Activated CD8-positive, alpha-beta T cell treated with anti-CD3 and anti-CD28 coated beads for 36 hours (primary cell): ENCODE measurements at regions of chr4 and their contacts with region 1.

Region 1: DNA sequence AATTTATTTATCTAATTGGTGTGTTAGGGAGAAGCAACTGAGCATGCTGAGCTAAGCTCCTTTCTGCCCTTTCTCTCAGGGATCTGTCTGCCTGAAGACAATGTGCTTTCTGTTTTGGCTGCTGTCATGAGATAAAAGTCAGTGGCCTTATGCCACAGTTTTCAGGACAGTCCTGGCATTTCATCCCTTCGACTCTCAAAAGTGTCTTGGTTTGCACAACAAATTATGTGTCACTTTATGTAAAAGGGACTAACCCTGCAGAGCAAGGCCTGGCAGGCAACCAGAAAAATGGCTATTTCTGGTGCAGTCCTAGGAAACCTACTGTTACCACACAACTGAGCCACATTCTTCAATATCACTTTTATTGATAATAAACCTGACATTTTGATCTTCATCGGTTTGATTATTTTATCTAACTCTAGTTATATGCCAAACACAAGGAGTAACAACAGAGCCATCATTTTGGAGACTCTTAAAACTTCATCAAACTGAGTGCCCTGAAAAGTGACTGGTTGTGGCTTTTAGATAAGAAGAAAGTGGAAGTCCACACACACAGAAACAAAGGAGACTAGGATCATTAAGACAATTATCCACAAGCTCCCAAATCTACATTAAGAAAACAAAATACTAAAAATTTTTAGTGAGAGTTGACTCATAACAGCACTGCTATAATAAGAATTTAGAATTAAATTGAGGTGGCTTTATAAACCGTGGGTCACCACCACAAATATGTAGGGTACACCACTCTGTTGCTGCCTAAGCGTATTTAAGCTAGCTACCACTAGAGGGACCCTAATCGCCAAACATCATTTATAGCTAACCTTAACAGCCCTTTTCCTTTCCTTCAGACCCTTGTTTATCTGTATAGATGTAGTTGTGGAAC is 95.9 kb upstream of the PTPN13 start:
- DNase-seq: no peak
- ATAC-seq: peak; percentile 79
- H3K4me3 Mint-ChIP-seq: no peak overlapping the region
- H3K27ac Mint-ChIP-seq: no peak overlapping the region
- H3K4me1 Mint-ChIP-seq: no peaks in the 10 kb centered on the region
- H3K27me3 Mint-ChIP-seq: peaks cover 4% of the 10 kb centered on the region
- CTCF ChIP-seq: peak; percentile 79

Region 2: DNA sequence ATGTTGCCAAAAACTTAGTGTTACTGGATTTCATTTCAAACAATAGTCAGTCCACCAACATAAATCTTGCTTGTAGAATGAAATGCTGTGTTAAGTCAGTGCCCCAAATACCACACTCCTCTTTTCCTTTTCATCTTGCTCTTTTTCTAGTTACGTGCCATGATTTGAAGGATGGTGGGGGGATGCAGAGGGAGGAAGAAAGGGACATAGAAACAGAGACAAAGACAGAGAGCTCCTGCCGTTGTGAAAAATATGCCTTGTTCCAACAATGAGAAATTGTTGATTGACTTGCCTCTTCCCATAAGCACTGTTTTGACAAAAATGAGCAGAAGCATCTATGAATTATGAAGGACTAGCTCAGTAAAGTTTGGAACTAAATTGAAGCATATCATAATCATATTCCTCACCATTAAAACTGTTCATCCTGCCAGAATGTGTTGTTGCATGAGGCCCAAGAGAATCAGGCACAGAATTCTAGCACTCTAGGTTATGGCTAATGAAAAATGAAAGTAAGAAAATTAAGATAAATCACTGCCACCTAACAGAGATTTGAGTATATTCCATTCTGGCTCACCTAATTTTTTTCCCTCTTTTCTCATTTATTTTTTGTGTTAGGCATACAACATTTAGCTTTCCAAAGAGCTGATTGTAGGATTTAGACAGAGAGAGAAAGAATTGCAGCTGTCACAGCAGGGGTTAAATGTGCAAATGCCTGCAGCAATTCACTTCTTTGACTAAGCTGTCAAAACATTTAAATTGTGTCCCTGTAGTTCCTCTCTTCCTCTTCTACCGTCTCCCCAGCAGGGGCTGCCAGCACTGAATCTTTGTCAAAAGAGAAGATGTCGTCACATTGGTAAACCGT is 15.7 kb before region 1 on chr4:
- CTCF ChIA-PET with region 1: interaction called, 27 read pairs
- POLR2A ChIA-PET with region 1: no interaction called
- intact Hi-C with region 1: no loop called
- DNase-seq: peak; percentile 3
- ATAC-seq: no peak
- H3K4me3 Mint-ChIP-seq: no peak overlapping the region
- H3K27ac Mint-ChIP-seq: no peak overlapping the region
- H3K4me1 Mint-ChIP-seq: no peaks in the 10 kb centered on the region
- H3K27me3 Mint-ChIP-seq: no peaks in the 10 kb centered on the region
- CTCF ChIP-seq: no peak

Region 3: GRCh38 chr4:86487738-86488348 is 10.4 kb before region 1 on chr4:
- CTCF ChIA-PET with region 1: interaction called, 27 read pairs
- POLR2A ChIA-PET with region 1: no interaction called
- intact Hi-C with region 1: no loop called
- DNase-seq: no peak
- ATAC-seq: no peak
- H3K4me3 Mint-ChIP-seq: no peak overlapping the region
- H3K27ac Mint-ChIP-seq: no peak overlapping the region
- H3K4me1 Mint-ChIP-seq: no peaks in the 10 kb centered on the region
- H3K27me3 Mint-ChIP-seq: no peaks in the 10 kb centered on the region
- CTCF ChIP-seq: no peak

Region 4: DNA sequence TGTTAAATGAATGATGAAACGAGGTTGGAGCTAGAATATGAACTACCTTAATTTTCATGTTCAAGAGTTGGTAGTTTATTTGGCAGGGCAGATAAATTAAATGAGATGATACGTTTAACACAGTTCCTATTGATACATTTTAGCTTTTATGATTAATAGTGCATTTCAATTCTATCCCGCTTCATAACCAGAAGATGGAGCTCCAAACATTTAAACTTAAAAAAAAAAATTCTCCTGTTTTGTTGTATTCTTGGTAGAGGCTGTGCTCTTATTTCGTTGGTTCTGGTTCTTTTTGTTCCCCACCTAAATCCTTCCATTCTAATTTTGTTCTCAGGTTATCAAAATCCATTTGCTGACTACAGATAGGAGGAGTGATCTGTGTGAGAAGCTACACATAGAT is 24.1 kb after region 1 on chr4:
- CTCF ChIA-PET with region 1: interaction called, 10 read pairs
- POLR2A ChIA-PET with region 1: no interaction called
- intact Hi-C with region 1: no loop called
- DNase-seq: no peak
- ATAC-seq: no peak
- H3K4me3 Mint-ChIP-seq: no peak overlapping the region
- H3K27ac Mint-ChIP-seq: no peak overlapping the region
- H3K4me1 Mint-ChIP-seq: no peaks in the 10 kb centered on the region
- H3K27me3 Mint-ChIP-seq: peaks cover 4% of the 10 kb centered on the region
- CTCF ChIP-seq: no peak

Region 5: DNA sequence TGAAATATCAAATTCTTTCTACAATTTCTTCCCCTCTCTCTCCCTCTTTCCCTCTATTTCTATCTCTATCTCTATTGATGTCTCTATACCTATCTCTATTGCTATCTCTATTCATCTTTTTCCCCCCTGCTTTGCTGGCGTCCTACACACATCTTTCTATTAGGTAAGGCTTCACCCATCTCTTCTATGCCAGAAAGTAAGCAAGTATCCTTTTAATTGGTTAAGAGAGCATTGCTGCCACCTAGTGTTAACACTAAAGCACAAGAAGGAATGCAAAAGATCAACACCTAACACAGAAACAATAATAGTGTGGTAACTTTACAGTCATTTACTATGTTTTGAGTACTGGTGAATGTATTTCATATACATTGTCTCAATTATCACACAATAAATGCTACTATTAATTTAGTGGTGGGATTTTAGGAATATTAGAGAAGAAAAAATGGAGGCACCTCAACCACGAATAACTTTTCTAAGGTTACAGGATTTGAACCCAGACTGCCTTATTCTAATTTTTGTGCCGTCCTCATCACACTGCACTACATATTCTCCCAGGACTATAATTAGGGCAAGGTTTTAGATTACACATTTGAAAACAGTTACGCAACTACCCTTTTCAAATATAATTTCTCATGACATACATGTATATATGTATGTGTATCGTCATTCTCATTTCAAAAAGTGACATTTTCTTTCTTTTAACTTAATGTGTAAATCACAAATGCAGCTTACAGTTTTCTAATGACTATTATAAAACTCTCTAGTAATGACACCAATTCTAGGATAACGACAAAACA is 397.7 kb after region 1 on chr4:
- CTCF ChIA-PET with region 1: interaction called, 23 read pairs
- POLR2A ChIA-PET with region 1: interaction called, 5 read pairs
- intact Hi-C with region 1: loop called (anchors 1 kb)
- DNase-seq: no peak
- ATAC-seq: peak; percentile 52
- H3K4me3 Mint-ChIP-seq: no peak overlapping the region
- H3K27ac Mint-ChIP-seq: no peak overlapping the region
- H3K4me1 Mint-ChIP-seq: peaks cover 8% of the 10 kb centered on the region
- H3K27me3 Mint-ChIP-seq: peaks cover 17% of the 10 kb centered on the region
- CTCF ChIP-seq: peak; percentile 77

Region 6: GRCh38 chr4:86908251-86908657 is 410.0 kb after region 1 on chr4:
- CTCF ChIA-PET with region 1: interaction called, 13 read pairs
- POLR2A ChIA-PET with region 1: no interaction called
- intact Hi-C with region 1: no loop called
- DNase-seq: no peak
- ATAC-seq: no peak
- H3K4me3 Mint-ChIP-seq: no peak overlapping the region
- H3K27ac Mint-ChIP-seq: no peak overlapping the region
- H3K4me1 Mint-ChIP-seq: peaks cover 16% of the 10 kb centered on the region
- H3K27me3 Mint-ChIP-seq: peaks cover 4% of the 10 kb centered on the region
- CTCF ChIP-seq: no peak